Breast epithelium (tissue), 4 donors: ENCODE measurements at regions of chr14 and their contacts with region 1.

Region 1: DNA sequence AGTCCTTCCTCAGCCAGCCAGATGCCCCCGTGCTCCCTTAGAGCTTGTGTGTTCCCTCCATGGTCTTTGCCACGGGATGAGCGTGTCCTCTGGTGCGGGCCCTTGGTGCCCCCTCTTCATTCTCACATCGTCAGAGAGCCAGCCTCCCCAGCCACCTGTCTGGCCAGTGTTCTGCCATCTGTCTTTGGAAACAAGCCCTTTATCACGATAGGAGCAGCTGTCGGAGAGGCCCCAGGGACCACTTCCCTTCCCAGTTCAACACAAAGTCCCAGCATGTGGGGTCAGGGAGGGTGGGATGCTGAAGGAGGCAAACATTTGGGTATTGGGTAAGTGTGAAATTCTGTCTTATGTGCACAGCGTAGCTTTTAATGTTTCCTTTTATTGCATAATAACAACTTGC is 44.5 kb downstream of the DYNC1H1 start:
- DNase-seq: no peak
- H3K4me3 ChIP-seq: no peak overlapping the region
- H3K27ac ChIP-seq: no peak overlapping the region
- H3K4me1 ChIP-seq: no peaks in the 10 kb centered on the region
- H3K27me3 ChIP-seq: no peaks in the 10 kb centered on the region
- CTCF ChIP-seq: no peak
- POLR2A ChIP-seq: no peak

Region 2: DNA sequence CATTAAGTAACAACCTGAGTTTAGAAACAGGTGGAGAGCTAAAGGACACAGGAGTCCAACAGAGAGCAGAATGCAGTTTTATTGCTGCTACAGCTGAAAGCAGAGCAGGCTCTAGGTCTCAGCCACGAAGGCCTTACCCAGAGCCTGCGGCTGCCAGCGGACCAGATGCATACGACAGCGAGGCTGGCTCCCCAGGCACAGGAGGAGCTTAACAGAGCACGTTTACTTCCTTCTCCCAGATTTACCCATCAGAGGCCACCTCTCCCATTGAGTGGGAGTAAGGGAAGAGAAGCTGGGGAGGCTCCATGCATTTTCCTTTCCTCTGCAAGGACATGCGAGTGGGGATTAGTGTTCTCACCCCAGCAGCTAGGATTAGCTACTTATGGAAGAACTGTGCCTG is 21.9 kb before region 1 on chr14:
- intact Hi-C with region 1: loop called (anchors 1 kb)
- DNase-seq: no peak
- H3K4me3 ChIP-seq: no peak overlapping the region
- H3K27ac ChIP-seq: no peak overlapping the region
- H3K4me1 ChIP-seq: no peaks in the 10 kb centered on the region
- H3K27me3 ChIP-seq: no peaks in the 10 kb centered on the region
- CTCF ChIP-seq: no peak
- POLR2A ChIP-seq: no peak